ENCODE measurements at regions of chr1 and their contacts with region 1.

Region 1: GRCh38 chr1:11037740-11038182 is 9.3 kb downstream of the MASP2 start:
- DNase-seq: peak; percentile 81 to 94 (median 91)
- ATAC-seq: peak; percentile 100
- H3K4me3 ChIP-seq: no peak overlapping the region
- H3K4me3 Mint-ChIP-seq: no peak overlapping the region
- H3K27ac ChIP-seq: no peak overlapping the region
- H3K27ac Mint-ChIP-seq: no peak overlapping the region
- H3K4me1 ChIP-seq: peaks cover 4% of the 10 kb centered on the region
- H3K4me1 Mint-ChIP-seq: peaks cover 7% of the 10 kb centered on the region
- H3K27me3 ChIP-seq: peaks cover 0 to 3% of the 10 kb centered on the region in 2 experiments
- H3K27me3 Mint-ChIP-seq: peaks cover 6% of the 10 kb centered on the region
- CTCF ChIP-seq: peak; percentile 93

Region 2: GRCh38 chr1:11012250-11013171 is 25.2 kb before region 1 on chr1 and contains the start of gene TARDBP:
- CTCF ChIA-PET with region 1: interaction called, 15 read pairs
- POLR2A ChIA-PET with region 1: interaction called, 3 read pairs
- intact Hi-C with region 1: no loop called
- DNase-seq: peak; percentile 82 to 95 (median 90)
- ATAC-seq: peak; percentile 87
- H3K4me3 ChIP-seq: peak within 1 kb of the TSS; percentile 78 to 94
- H3K4me3 Mint-ChIP-seq: peak within 1 kb of the TSS; percentile 92
- H3K27ac ChIP-seq: peak within 1 kb of the TSS; percentile 95 to 97
- H3K27ac Mint-ChIP-seq: peak within 1 kb of the TSS; percentile 97
- H3K4me1 ChIP-seq: peaks cover 38% of the 10 kb centered on the region
- H3K4me1 Mint-ChIP-seq: peaks cover 36% of the 10 kb centered on the region
- H3K27me3 ChIP-seq: no peaks in the 10 kb centered on the region
- H3K27me3 Mint-ChIP-seq: no peaks in the 10 kb centered on the region
- CTCF ChIP-seq: no peak
- total RNA-seq, gene TARDBP: 125 to 131 TPM

Region 3: GRCh38 chr1:11059990-11060830 is 22.4 kb after region 1 on chr1 and contains the start of gene SRM:
- CTCF ChIA-PET with region 1: interaction called, 57 read pairs
- POLR2A ChIA-PET with region 1: interaction called, 13 read pairs
- intact Hi-C with region 1: loop called (anchors 1 kb)
- DNase-seq: peak; percentile 80 to 95 (median 89)
- ATAC-seq: peak; percentile 94
- H3K4me3 ChIP-seq: peak within 1 kb of the TSS; percentile 77 to 84
- H3K4me3 Mint-ChIP-seq: peak within 1 kb of the TSS; percentile 91
- H3K27ac ChIP-seq: peak within 1 kb of the TSS; percentile 69 to 82
- H3K27ac Mint-ChIP-seq: peak within 1 kb of the TSS; percentile 92
- H3K4me1 ChIP-seq: peaks cover 22% of the 10 kb centered on the region
- H3K4me1 Mint-ChIP-seq: peaks cover 32% of the 10 kb centered on the region
- H3K27me3 ChIP-seq: no peaks in the 10 kb centered on the region
- H3K27me3 Mint-ChIP-seq: no peaks in the 10 kb centered on the region
- CTCF ChIP-seq: peak; percentile 49
- total RNA-seq, gene SRM: 31.4 to 40.6 TPM

Region 4: GRCh38 chr1:11099310-11100149 is 61.8 kb after region 1 on chr1 and contains the start of gene EXOSC10:
- CTCF ChIA-PET with region 1: interaction called, 47 read pairs
- POLR2A ChIA-PET with region 1: interaction called, 6 read pairs
- intact Hi-C with region 1: loop called (anchors 2 to 10 kb)
- DNase-seq: peak; percentile 88 to 97 (median 95)
- ATAC-seq: peak; percentile 97
- H3K4me3 ChIP-seq: peak within 1 kb of the TSS; percentile 70 to 86
- H3K4me3 Mint-ChIP-seq: peak within 1 kb of the TSS; percentile 87
- H3K27ac ChIP-seq: peak within 1 kb of the TSS; percentile 60 to 84
- H3K27ac Mint-ChIP-seq: peak within 1 kb of the TSS; percentile 96
- H3K4me1 ChIP-seq: peaks cover 12% of the 10 kb centered on the region
- H3K4me1 Mint-ChIP-seq: peaks cover 17% of the 10 kb centered on the region
- H3K27me3 ChIP-seq: no peaks in the 10 kb centered on the region
- H3K27me3 Mint-ChIP-seq: no peaks in the 10 kb centered on the region
- CTCF ChIP-seq: no peak
- total RNA-seq, gene EXOSC10: 95.0 to 98.1 TPM

Region 5: GRCh38 chr1:11151826-11152612 is 114.3 kb after region 1 on chr1:
- CTCF ChIA-PET with region 1: interaction called, 11 read pairs
- POLR2A ChIA-PET with region 1: no interaction called
- intact Hi-C with region 1: no loop called
- DNase-seq: no peak
- ATAC-seq: no peak
- H3K4me3 ChIP-seq: no peak overlapping the region
- H3K4me3 Mint-ChIP-seq: no peak overlapping the region
- H3K27ac ChIP-seq: no peak overlapping the region
- H3K27ac Mint-ChIP-seq: no peak overlapping the region
- H3K4me1 ChIP-seq: no peaks in the 10 kb centered on the region
- H3K4me1 Mint-ChIP-seq: peaks cover 3% of the 10 kb centered on the region
- H3K27me3 ChIP-seq: no peaks in the 10 kb centered on the region
- H3K27me3 Mint-ChIP-seq: no peaks in the 10 kb centered on the region
- CTCF ChIP-seq: no peak

Region 6: DNA sequence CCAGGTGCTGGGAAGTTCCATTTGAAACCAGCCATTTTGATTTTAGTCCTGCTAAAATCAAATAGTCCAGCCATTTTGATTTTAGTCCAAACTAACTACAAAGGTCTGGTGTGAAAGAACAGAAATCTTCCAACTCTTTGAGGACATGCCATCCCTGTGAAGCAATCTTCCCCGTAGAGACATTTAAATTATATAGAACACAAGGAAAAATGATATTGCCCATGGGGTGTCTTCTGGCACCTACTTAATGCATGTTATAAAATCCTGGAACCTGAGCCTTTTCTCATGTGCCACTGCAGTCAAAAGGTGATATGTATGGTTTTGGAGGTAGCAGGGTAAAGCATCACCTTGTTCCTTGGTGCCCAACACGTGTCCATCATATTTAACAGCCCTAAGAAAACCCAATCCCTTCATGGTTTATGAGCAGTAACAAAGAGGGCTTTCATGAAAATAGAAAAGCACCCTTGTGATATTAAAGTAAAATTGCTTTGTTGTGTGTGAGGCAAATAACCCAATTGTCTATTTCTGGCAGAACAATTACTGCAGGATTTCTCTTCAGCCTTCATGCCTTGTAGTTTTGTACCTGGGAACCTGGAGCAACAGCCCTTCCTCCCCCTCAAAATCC is 177.7 kb after region 1 on chr1:
- CTCF ChIA-PET with region 1: interaction called, 10 read pairs
- POLR2A ChIA-PET with region 1: no interaction called
- intact Hi-C with region 1: loop called in 1 of 2 experiments (anchors 5 kb)
- DNase-seq: no peak
- ATAC-seq: no peak
- H3K4me3 ChIP-seq: no peak overlapping the region
- H3K4me3 Mint-ChIP-seq: no peak overlapping the region
- H3K27ac ChIP-seq: no peak overlapping the region
- H3K27ac Mint-ChIP-seq: no peak overlapping the region
- H3K4me1 ChIP-seq: no peaks in the 10 kb centered on the region
- H3K4me1 Mint-ChIP-seq: no peaks in the 10 kb centered on the region
- H3K27me3 ChIP-seq: no peaks in the 10 kb centered on the region
- H3K27me3 Mint-ChIP-seq: no peaks in the 10 kb centered on the region
- CTCF ChIP-seq: no peak

Region 7: GRCh38 chr1:11298390-11299224 is 260.8 kb after region 1 on chr1:
- CTCF ChIA-PET with region 1: interaction called, 7 read pairs
- POLR2A ChIA-PET with region 1: no interaction called
- intact Hi-C with region 1: loop called in 1 of 2 experiments (anchors 1 kb)
- DNase-seq: no peak
- ATAC-seq: no peak
- H3K4me3 ChIP-seq: no peak overlapping the region
- H3K4me3 Mint-ChIP-seq: no peak overlapping the region
- H3K27ac ChIP-seq: no peak overlapping the region
- H3K27ac Mint-ChIP-seq: no peak overlapping the region
- H3K4me1 ChIP-seq: peaks cover 16% of the 10 kb centered on the region
- H3K4me1 Mint-ChIP-seq: peaks cover 17% of the 10 kb centered on the region
- H3K27me3 ChIP-seq: no peaks in the 10 kb centered on the region
- H3K27me3 Mint-ChIP-seq: no peaks in the 10 kb centered on the region
- CTCF ChIP-seq: no peak